CD8-positive, alpha-beta memory T cell (primary cell): ENCODE measurements at regions of chr19 and their contacts with region 1.

Region 1: GRCh38 chr19:41554907-41555306 is 21.1 kb upstream of the CEACAM21 start:
- DNase-seq: peak in 4 of 5 donors; percentile 21 to 75 (median 59)
- H3K4me3 ChIP-seq: peak overlapping the region; percentile 44
- H3K4me3 Mint-ChIP-seq: peak overlapping the region; percentile 63 to 100 (median 98)
- H3K27ac ChIP-seq: no peak overlapping the region
- H3K27ac Mint-ChIP-seq: peak overlapping the region; percentile 9 to 96 (median 75)
- H3K4me1 ChIP-seq: peaks cover 64% of the 10 kb centered on the region
- H3K4me1 Mint-ChIP-seq: peaks cover 73 to 82% (median 77%) of the 10 kb centered on the region in 3 donors
- H3K27me3 ChIP-seq: no peaks in the 10 kb centered on the region
- H3K27me3 Mint-ChIP-seq: peaks cover 0 to 1% of the 10 kb centered on the region in 2 donors

Region 2: DNA sequence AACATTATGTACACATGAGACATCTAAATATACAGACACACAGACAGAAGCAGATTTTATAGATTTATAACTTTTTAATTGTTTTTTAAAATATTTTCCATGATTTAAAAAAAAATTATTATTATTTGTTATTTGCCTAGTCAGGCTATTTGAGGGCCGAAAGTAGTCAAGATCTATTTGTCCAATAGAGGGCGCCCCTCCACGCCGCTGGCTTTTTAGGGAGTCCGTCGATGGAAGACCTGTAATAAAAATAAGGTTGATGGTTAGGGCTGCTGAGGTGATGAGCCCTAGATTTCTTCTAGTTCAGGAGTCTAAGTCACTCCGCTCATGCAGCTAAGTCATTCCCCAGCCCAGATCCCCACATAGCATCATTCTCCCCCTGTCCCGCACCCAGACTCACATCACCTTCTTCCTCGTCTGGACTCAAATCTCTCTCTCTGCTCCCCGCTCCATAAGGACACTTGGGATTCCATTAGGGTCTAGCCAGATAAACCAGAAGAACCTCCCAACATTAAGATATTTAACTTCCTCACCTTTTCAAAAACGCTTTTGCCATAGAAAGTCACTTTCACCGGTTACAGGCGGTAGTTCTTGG is 12.8 kb before region 1 on chr19:
- CTCF ChIA-PET with region 1: interaction called, 180 read pairs
- POLR2A ChIA-PET with region 1: interaction called, 13 read pairs
- DNase-seq: peak; percentile 61 to 86 (median 69)
- H3K4me3 ChIP-seq: no peak overlapping the region
- H3K4me3 Mint-ChIP-seq: peak overlapping the region in 6 of 7 donors; percentile 15 to 57 (median 53)
- H3K27ac ChIP-seq: no peak overlapping the region
- H3K27ac Mint-ChIP-seq: peak overlapping the region; percentile 9 to 94 (median 37)
- H3K4me1 ChIP-seq: peaks cover 46% of the 10 kb centered on the region
- H3K4me1 Mint-ChIP-seq: peaks cover 42 to 51% (median 49%) of the 10 kb centered on the region in 3 donors
- H3K27me3 ChIP-seq: no peaks in the 10 kb centered on the region
- H3K27me3 Mint-ChIP-seq: no peaks in the 10 kb centered on the region